ENCODE measurements at regions of chr2 and their contacts with region 1.

Region 1: GRCh38 chr2:70214953-70215549 is 24.2 kb upstream of the C2orf42 start:
- DNase-seq: no peak
- H3K4me3 ChIP-seq: no peak overlapping the region
- CTCF ChIP-seq: no peak

Region 2: DNA sequence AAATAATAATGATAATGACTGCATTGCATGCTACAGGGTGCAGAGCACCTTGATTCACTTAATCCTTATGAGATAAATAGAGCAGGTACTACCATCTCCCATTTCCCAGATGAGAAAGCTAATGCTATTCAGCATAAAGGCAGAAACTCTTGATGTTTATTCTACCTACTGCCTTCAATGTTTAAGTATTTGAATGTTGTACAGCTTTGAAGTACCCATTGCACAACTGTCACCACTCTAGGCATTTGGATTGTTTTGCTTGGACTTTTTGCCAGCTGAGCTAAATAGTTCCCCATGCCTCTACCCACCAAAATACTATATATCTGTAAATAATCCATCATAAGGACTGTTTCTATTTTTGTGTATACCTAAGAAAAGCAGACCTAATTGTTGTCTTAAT is 307.8 kb before region 1 on chr2:
- in situ Hi-C with region 1: loop called (anchors 5 kb)
- DNase-seq: no peak
- H3K4me3 ChIP-seq: no peak overlapping the region
- CTCF ChIP-seq: no peak